Activated T-helper 2 cell treated with anti-CD3 and anti-CD28 coated beads, Interferon-gamma antibody, Interleukin-2, Interleukin-4, amounts not matched to agents 10 μg/mL and 5 μg/mL and 100 μg/mL, durations not matched to agents 14 hours and 24 hours and 36 hours (primary cell): ENCODE measurements at regions of chr2 and their contacts with region 1.

Region 1: GRCh38 chr2:200963124-200963917 is at the start of gene ORC2:
- DNase-seq: peak; percentile 91
- H3K4me3 Mint-ChIP-seq: peak within 1 kb of the TSS; percentile 96
- H3K27ac Mint-ChIP-seq: peak within 1 kb of the TSS; percentile 86
- H3K4me1 Mint-ChIP-seq: peaks cover 53% of the 10 kb centered on the region
- H3K27me3 Mint-ChIP-seq: no peaks in the 10 kb centered on the region
- total RNA-seq, gene ORC2: 50.7 and 62.9 TPM in 2 replicates

Region 2: DNA sequence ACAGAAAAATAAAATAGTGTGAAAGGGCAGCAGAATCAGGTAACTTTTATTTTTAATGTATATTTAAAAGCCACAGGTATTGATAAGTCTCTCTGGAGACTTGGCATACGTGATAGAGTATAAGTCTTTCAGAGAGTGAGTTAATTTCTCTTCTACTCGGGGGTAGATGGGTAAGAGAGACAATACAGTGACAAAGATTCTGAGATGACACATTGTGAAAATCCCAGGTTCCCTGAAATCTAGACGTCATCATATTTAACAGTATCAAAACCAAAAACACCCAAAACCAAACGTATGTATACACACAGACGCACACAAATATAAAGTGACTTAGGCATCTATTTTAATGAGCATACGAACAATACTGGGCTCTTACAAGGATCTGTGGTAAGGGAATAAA is 40.9 kb before region 1 on chr2:
- intact Hi-C with region 1: loop called (anchors 5 kb)
- DNase-seq: no peak
- H3K4me3 Mint-ChIP-seq: no peak overlapping the region
- H3K27ac Mint-ChIP-seq: peak overlapping the region; percentile 83
- H3K4me1 Mint-ChIP-seq: peaks cover 11% of the 10 kb centered on the region
- H3K27me3 Mint-ChIP-seq: no peaks in the 10 kb centered on the region

Region 3: GRCh38 chr2:200944467-200945394 is 18.6 kb before region 1 on chr2:
- intact Hi-C with region 1: loop called (anchors 2 kb)
- DNase-seq: no peak
- H3K4me3 Mint-ChIP-seq: no peak overlapping the region
- H3K27ac Mint-ChIP-seq: peak overlapping the region; percentile 87
- H3K4me1 Mint-ChIP-seq: peaks cover 25% of the 10 kb centered on the region
- H3K27me3 Mint-ChIP-seq: no peaks in the 10 kb centered on the region

Region 4: DNA sequence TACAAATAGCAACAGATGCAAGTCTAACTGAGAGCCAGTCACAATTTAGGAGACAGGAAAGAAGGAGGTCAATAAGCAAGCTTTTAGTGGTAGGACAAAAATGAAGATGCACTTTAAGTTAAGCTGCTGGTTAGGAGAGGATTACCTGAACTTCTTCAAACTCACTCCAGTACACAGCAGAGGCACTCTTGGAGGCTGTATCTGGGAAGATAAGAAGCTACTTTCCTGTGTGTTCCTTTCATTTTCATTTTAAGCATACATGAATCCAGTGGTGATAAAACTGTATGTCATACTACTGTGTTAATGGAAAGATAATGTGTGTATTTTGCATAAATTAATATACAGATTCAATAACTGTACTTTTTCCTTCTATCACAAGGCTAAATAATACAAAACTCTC is 58.6 kb after region 1 on chr2:
- intact Hi-C with region 1: loop called (anchors 10 kb)
- DNase-seq: no peak
- H3K4me3 Mint-ChIP-seq: no peak overlapping the region
- H3K27ac Mint-ChIP-seq: peak overlapping the region; percentile 39
- H3K4me1 Mint-ChIP-seq: peaks cover 16% of the 10 kb centered on the region
- H3K27me3 Mint-ChIP-seq: no peaks in the 10 kb centered on the region

Region 5: DNA sequence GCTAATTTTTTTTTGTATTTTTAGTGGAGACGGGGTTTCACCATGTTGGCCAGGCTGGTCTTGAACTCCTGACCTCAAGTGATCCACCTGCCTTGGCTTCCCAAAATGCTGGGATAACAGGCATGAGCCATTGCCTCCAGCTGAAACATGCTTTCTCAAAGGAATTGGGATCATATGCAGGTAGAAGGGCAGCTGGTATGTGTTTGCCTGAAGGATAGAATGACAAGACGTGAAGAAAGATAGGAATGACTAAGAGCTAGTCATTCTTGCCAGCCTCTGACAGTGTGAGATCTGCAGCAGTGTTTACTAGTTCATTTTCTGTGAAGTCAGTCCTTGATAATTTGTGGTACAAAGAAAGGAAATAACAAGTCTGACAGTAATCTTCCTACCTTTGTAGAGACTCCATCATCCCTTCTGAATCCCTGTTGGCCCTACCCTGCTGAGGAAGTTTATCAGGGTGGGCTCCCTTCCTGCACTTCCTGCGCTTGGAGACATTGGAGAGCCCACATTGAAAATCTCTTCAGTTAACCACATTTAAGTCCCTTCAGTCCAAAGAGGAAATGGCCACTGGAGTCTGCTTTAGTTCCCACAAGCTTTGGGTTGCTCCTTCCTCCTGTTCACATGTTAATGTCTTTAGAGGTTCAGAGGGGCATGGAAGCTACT is 167.3 kb after region 1 on chr2:
- intact Hi-C with region 1: loop called (anchors 2 kb)
- DNase-seq: no peak
- H3K4me3 Mint-ChIP-seq: peak overlapping the region; percentile 90
- H3K27ac Mint-ChIP-seq: peak overlapping the region; percentile 92
- H3K4me1 Mint-ChIP-seq: peaks cover 50% of the 10 kb centered on the region
- H3K27me3 Mint-ChIP-seq: no peaks in the 10 kb centered on the region

Region 6: DNA sequence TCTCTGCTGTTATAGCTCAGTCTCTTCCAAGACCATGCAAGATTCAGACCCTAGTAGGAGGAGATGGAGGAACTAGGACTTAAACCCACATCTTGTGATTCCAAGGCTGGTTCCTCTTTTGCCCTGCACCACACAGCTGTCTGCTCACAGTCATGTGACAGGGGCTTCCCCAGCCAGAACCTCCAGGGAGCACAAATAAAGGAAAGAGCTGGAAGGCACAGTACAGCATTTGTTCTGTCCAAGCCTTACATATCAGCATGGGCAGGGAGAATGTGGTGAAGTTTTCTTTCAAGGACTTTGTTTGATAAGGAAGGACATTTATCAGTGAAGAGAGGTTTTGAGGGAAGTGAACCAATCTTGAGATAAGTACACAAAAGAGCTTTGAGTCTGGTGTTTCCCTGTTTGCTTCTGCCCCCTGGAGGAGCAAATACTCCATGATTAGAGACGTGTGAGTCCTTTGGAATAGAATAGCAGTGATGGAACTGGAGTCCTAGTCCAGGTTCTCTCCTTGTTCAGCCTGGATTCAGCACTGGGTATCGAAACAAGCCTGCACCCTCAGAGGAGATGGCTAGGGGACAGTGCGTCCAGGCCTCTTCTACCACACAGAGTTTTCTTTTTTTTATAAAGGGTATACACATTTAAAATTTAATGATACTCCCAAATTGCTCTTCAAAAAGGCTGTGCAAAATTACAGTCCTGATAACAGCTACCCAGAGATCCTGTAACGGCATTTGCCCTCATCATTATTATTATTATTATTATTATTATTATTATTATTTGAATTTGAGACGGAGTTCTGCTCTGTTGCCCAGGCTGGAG is 195.0 kb after region 1 on chr2:
- intact Hi-C with region 1: loop called (anchors 5 kb)
- DNase-seq: peak; percentile 49
- H3K4me3 Mint-ChIP-seq: no peak overlapping the region
- H3K27ac Mint-ChIP-seq: peak overlapping the region; percentile 40
- H3K4me1 Mint-ChIP-seq: peaks cover 14% of the 10 kb centered on the region
- H3K27me3 Mint-ChIP-seq: no peaks in the 10 kb centered on the region